Activated T-helper 2 cell treated with anti-CD3 and anti-CD28 coated beads, Interferon-gamma antibody, Interleukin-2, Interleukin-4, amounts not matched to agents 10 μg/mL and 5 μg/mL and 100 μg/mL, durations not matched to agents 14 hours and 24 hours and 36 hours (primary cell): ENCODE measurements at regions of chr7 and their contacts with region 1.

Region 1: DNA sequence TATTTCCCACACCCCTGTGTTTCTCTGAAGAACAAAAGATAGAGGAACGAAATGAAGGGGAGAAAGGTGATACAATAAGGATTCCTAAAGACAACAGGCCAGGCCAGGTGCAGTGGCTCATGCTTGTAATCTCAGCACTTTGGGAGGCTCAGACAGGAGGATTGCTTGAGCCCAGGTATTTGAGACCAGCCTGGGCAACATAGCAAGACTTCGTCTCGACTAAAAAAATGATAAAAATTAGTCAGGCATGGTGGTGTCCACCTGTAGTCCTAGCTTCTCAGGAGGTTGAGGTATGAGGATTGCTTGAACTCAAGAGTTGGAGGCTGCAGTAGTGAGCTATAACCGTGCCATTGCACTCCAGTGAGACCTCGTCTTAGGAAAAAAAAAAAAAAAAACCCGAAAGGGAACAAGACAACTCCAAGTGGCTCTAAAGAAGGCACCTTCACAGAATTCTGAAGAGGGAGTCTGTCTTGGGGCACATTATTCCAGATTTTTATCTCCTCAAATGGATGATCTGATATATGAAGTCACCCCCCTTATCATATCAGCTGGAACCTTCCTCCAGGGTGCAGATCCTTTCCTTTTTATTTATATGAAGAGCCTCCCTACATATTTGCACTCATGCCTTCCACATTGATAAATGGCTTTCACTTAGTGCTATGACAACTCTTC is 41.5 kb upstream of the FAM3C start:
- DNase-seq: no peak
- H3K4me3 Mint-ChIP-seq: peak overlapping the region; percentile 55
- H3K27ac Mint-ChIP-seq: peak overlapping the region; percentile 86
- H3K4me1 Mint-ChIP-seq: peaks cover 23% of the 10 kb centered on the region
- H3K27me3 Mint-ChIP-seq: no peaks in the 10 kb centered on the region

Region 2: GRCh38 chr7:121372376-121373010 is 65.1 kb before region 1 on chr7:
- intact Hi-C with region 1: loop called (anchors 1 kb)
- DNase-seq: no peak
- H3K4me3 Mint-ChIP-seq: peak overlapping the region; percentile 18
- H3K27ac Mint-ChIP-seq: peak overlapping the region; percentile 50
- H3K4me1 Mint-ChIP-seq: peaks cover 57% of the 10 kb centered on the region
- H3K27me3 Mint-ChIP-seq: no peaks in the 10 kb centered on the region

Region 3: DNA sequence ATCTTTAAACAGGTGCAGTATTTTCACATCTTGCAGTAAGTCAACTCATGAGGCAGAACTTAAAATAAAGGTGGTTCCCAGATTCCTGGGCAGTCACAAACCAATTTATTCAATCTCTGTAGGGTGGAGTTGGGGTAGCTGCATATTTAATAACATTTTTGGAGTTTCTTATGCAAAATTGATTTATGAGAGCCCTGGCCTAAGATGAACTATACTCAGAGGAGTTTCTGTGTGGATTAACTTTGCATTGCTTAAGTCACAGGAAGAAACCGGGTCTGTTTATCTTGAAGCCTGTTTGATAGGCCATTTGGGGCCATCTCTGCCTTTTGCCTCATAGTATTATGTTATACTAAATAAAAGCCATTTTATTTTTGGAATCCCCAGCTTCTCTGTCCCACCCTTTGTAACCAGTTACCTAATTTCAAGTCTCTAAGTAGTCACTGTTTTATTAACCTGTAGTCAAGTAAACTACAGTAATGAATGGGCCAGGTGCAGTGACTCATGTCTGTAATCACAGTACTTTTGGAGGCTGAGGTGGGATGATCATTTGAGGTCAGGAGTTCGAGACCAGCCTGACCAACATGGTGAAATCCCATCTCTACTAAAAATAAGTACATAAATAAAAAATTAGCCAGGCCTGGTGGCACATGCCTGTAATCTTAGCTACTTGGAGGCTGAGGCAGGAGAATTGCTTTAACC is 62.9 kb after region 1 on chr7:
- intact Hi-C with region 1: loop called (anchors 2 kb)
- DNase-seq: no peak
- H3K4me3 Mint-ChIP-seq: no peak overlapping the region
- H3K27ac Mint-ChIP-seq: peak overlapping the region; percentile 86
- H3K4me1 Mint-ChIP-seq: peaks cover 25% of the 10 kb centered on the region
- H3K27me3 Mint-ChIP-seq: no peaks in the 10 kb centered on the region

Region 4: DNA sequence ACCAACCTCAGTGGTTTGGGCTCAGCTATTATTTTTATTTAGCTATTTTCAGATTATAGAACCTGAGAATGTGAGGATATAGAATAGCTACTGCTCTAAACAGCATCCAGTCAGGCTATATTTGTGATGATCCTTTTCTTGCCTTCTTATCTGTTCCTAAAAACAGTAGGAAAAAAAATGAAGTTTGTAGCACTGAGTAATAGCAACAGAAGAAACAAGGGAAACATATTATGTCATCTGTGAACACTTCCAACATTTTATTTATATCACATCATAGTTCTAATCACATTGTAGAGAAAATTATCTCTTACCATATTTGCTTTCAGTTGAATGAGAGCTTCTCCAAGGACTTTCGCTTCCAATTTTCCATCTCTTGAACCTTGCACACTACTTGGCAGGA is 205.7 kb after region 1 on chr7:
- intact Hi-C with region 1: no loop called
- DNase-seq: no peak
- H3K4me3 Mint-ChIP-seq: no peak overlapping the region
- H3K27ac Mint-ChIP-seq: no peak overlapping the region
- H3K4me1 Mint-ChIP-seq: no peaks in the 10 kb centered on the region
- H3K27me3 Mint-ChIP-seq: no peaks in the 10 kb centered on the region